GM13977 (cell line): ENCODE measurements at regions of chr3 and their contacts with region 1.

Region 1: GRCh38 chr3:32947789-32948238 is 3.6 kb upstream of the CCR4 start:
- DNase-seq: peak; percentile 52
- CTCF ChIP-seq: peak; percentile 82

Region 2: GRCh38 chr3:33074217-33075067 is 126.6 kb after region 1 on chr3:
- in situ Hi-C with region 1: loop called (anchors 5 kb)
- DNase-seq: peak; percentile 79
- CTCF ChIP-seq: peak; percentile 93

Region 3: DNA sequence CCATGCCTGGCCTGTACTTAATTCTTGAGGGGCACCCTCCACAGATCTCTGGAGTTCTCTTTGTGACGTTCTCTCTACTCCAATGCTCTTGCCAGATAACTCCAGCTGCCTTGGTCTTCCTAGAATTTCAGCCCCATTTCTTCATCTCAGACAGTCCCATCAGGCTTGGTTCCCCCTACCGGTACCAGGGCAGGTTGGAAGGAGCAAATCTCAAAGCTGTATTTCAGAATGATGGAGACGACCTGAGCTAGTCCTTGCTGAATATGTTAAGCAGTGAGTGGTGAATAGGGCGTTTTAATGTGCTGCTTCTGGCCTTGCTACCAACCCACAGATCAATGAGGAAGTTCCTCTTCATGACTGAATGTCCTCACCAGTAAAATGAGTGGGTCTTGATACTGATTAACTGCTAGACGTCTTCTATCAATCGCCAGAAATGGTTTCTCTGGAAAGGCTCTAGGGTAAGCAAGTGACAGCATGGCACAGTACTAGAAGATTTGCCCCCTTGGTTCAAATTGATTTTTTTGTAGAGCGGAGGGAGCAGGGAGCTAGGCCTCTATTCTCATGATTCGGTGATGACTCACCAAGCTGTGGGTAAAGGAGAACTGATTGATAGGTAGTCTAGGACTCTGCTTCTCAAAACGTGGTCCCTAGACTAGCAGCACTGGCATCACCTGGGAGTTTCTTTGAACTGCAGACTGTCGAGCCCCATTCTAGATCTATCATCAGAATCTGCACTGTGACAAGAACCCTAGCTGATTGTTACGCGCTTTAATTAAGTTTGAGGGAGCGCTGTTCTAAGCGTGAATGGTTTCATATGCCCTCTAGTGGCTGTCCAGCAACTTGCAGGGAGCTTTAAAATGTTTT is 424.6 kb after region 1 on chr3:
- in situ Hi-C with region 1: loop called (anchors 25 kb)
- DNase-seq: peak; percentile 52
- CTCF ChIP-seq: peak; percentile 90

Region 4: DNA sequence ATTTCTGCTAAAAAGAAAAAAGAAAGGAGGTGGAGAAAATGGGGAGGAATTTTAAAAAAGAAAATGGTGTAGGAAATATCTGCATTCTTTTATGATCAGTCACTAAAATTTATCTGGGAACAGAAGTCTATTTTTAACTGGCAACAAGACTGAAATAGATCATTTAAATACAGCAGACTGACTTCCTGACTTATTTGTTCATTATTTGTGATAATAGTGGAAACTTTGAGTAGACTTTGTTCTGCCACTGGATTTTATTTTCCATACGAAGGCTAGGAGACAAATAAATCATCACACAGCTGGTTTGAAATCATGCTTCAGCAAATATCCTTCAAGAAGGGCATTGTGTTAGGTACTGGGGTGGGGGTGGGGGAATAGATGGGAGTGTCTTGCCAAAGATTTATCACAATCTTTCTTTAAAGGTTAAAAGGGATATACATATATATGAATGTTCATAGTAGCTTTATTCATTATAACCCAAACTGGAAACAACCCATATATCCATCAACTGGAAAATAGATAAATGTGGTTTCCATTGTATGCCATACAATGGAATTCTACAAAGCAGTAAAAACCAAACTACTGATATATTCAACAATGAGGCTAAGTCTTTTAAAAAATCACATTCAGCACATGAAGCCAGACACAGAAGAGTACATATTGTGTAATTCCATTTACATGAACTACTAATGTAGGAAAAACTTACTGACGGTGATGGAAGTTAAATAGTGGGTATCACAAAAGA is 775.0 kb after region 1 on chr3:
- in situ Hi-C with region 1: no loop called
- DNase-seq: no peak
- CTCF ChIP-seq: no peak